BJ (cell line): ENCODE measurements at regions of chr5 and their contacts with region 1.

Region 1: DNA sequence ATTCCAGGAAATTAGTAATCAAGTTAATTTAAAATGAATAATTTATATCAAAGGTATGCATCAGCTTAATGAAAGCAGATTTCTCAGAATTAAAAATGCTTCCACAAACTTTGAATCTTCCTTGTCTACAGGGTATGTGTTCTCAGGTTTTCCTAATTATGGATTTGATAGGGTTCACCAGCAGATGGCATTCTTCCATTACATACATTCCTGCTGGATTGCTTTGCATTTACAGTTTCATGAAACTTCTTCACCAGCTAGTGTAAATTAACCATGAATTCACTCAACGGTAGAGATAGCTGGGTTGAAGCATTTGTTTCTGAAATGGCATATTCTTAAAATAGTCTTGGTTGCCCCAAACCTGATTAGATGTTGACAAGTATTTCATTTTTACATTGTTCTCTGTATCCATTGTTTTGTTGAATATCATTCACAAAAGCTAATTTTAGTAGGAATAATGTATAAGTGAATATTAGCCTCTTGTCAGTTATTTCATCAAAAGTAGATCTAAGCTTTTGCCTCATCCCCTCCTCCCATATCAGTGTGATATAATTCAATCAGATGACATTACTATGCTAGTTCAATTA is 68.7 kb upstream of the WDR41 start:
- DNase-seq: no peak
- H3K4me3 ChIP-seq: no peak overlapping the region
- H3K27me3 ChIP-seq: peaks cover 6% of the 10 kb centered on the region
- CTCF ChIP-seq: peak; percentile 51

Region 2: DNA sequence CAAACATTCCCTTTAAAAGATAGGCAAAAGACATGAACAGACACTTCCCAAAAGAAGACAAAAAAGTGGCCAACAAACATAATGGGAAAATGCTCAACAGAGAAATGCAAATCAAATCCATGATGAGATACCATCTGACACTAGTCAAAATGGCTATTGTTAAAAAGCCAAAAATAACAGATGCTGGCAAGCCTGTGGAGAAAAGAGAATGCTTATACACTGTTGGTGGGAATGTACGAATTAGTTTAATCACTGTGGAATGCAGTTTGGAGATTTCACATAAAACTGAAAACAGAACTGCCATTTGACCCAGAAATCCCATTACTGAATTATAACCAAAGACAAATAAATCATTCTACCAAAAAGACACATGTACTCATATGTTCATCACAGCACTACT is 10.4 kb before region 1 on chr5:
- CTCF ChIA-PET with region 1: interaction called, 11 read pairs
- POLR2A ChIA-PET with region 1: no interaction called
- DNase-seq: no peak
- H3K4me3 ChIP-seq: no peak overlapping the region
- H3K27me3 ChIP-seq: no peaks in the 10 kb centered on the region
- CTCF ChIP-seq: no peak

Region 3: GRCh38 chr5:77832166-77832770 is 271.5 kb after region 1 on chr5:
- CTCF ChIA-PET with region 1: no interaction called
- POLR2A ChIA-PET with region 1: no interaction called
- DNase-seq: no peak
- H3K4me3 ChIP-seq: no peak overlapping the region
- H3K27me3 ChIP-seq: peaks cover 10% of the 10 kb centered on the region
- CTCF ChIP-seq: no peak